Caco-2 (cell line): ENCODE measurements at regions of chr18 and their contacts with region 1.

Region 1: DNA sequence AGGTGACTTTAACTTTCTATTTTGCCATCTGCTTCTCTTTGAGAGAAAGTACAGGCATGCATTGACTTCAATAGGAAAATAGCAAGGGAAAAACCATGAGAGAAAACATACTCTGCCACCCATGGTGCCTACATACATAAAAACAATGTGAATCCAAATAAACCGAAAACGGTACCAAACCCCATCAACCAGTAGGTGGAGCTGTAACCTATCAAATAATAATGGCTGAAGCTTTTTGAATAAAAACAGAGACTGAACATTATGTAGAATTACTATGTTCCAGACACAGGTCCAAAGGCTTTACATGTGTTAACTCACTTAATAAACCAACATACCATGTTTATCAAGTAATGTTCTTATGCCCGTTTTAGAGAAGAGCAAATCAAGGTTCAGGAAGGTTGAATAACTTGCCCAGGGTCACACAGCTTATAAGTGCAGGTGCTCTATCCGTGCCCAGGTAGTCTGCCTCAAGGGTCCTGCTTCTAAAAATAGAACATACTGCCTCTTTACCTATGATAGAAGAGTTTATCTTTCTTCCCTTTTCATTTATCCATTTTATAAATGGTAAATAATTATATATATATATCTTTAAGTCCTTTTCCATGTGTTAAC is 293.9 kb upstream of the SYT4 start:
- DNase-seq: peak in 1 of 2 experiments; percentile 18
- H3K4me3 ChIP-seq: no peak overlapping the region
- H3K4me3 Mint-ChIP-seq: no peak overlapping the region
- H3K27ac Mint-ChIP-seq: no peak overlapping the region
- H3K4me1 ChIP-seq: no peaks in the 10 kb centered on the region
- H3K4me1 Mint-ChIP-seq: no peaks in the 10 kb centered on the region
- H3K27me3 ChIP-seq: no peaks in the 10 kb centered on the region
- H3K27me3 Mint-ChIP-seq: no peaks in the 10 kb centered on the region
- CTCF ChIP-seq: peak; percentile 33 to 38

Region 2: DNA sequence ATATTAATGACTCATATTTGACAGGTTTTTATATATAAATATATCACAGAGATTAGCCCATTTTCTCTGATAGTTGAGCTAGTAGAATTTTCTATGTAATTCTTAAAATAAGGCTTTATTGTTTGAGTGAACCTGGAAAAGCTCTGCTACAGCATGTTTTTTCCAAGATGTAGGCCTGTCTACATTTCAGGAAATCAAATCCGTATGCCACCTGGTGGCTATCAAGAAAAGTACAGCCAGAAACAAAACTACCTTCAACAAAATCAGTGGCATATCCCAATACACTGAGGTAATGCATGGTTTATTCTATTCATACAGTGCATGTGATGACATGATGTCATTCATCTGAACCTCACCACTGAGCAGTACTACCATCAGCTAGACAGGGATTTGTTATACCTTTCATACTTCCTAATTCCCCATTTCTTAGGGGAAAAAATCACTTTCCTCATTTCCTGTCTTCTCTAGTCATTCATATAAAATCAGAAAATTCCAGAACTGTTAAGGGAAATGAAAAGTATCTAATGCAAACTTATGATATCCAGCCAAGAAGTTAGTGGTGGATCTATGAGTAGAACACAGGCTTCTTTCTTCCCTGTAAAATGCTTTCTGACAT is 16.5 kb after region 1 on chr18:
- CTCF ChIA-PET with region 1: interaction called, 3 read pairs
- POLR2A ChIA-PET with region 1: no interaction called
- intact Hi-C with region 1: loop called (anchors 1 kb)
- DNase-seq: no peak
- H3K4me3 ChIP-seq: no peak overlapping the region
- H3K4me3 Mint-ChIP-seq: no peak overlapping the region
- H3K27ac Mint-ChIP-seq: no peak overlapping the region
- H3K4me1 ChIP-seq: no peaks in the 10 kb centered on the region
- H3K4me1 Mint-ChIP-seq: no peaks in the 10 kb centered on the region
- H3K27me3 ChIP-seq: no peaks in the 10 kb centered on the region
- H3K27me3 Mint-ChIP-seq: no peaks in the 10 kb centered on the region
- CTCF ChIP-seq: peak; percentile 29 to 48

Region 3: DNA sequence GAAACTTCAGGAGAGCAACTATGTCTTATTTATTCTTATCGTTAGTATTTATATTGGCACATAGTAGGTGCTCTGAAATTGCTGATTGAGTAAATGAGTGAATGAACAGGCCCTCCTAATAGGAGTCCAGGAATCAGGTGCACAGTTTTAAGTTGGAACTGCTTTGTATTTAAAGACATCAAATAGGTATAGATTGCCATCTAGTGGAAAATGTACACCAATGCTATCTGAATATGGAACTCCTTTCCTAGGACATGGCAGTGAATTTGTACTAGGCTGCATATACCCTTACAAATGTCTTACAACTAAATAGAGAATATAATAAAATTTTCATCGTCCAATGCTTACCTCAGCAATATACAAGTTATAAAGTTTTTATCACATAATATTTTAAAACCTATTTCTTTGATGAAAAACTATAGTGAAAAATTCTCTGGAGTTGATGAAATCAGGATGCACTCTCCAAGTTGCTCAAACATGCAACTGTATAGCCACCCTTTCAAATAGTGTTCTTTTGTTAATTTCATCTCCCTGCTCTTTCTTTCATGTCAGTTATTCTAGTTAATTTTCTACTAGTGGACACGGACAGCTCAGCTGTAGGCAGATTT is 25.0 kb after region 1 on chr18:
- CTCF ChIA-PET with region 1: no interaction called
- POLR2A ChIA-PET with region 1: no interaction called
- intact Hi-C with region 1: loop called (anchors 1 kb)
- DNase-seq: no peak
- H3K4me3 ChIP-seq: no peak overlapping the region
- H3K4me3 Mint-ChIP-seq: no peak overlapping the region
- H3K27ac Mint-ChIP-seq: no peak overlapping the region
- H3K4me1 ChIP-seq: no peaks in the 10 kb centered on the region
- H3K4me1 Mint-ChIP-seq: no peaks in the 10 kb centered on the region
- H3K27me3 ChIP-seq: no peaks in the 10 kb centered on the region
- H3K27me3 Mint-ChIP-seq: no peaks in the 10 kb centered on the region
- CTCF ChIP-seq: peak in 1 of 2 experiments; percentile 24

Region 4: GRCh38 chr18:43692099-43692690 is 121.0 kb after region 1 on chr18:
- CTCF ChIA-PET with region 1: no interaction called
- POLR2A ChIA-PET with region 1: no interaction called
- intact Hi-C with region 1: no loop called
- DNase-seq: no peak
- H3K4me3 ChIP-seq: no peak overlapping the region
- H3K4me3 Mint-ChIP-seq: no peak overlapping the region
- H3K27ac Mint-ChIP-seq: no peak overlapping the region
- H3K4me1 ChIP-seq: no peaks in the 10 kb centered on the region
- H3K4me1 Mint-ChIP-seq: no peaks in the 10 kb centered on the region
- H3K27me3 ChIP-seq: no peaks in the 10 kb centered on the region
- H3K27me3 Mint-ChIP-seq: no peaks in the 10 kb centered on the region
- CTCF ChIP-seq: no peak

Region 5: GRCh38 chr18:43789234-43790000 is 218.2 kb after region 1 on chr18:
- CTCF ChIA-PET with region 1: no interaction called
- POLR2A ChIA-PET with region 1: no interaction called
- intact Hi-C with region 1: no loop called
- DNase-seq: no peak
- H3K4me3 ChIP-seq: no peak overlapping the region
- H3K4me3 Mint-ChIP-seq: no peak overlapping the region
- H3K27ac Mint-ChIP-seq: no peak overlapping the region
- H3K4me1 ChIP-seq: no peaks in the 10 kb centered on the region
- H3K4me1 Mint-ChIP-seq: no peaks in the 10 kb centered on the region
- H3K27me3 ChIP-seq: no peaks in the 10 kb centered on the region
- H3K27me3 Mint-ChIP-seq: no peaks in the 10 kb centered on the region
- CTCF ChIP-seq: no peak